A549 (cell line): ENCODE measurements at regions of chr1 and their contacts with region 1.

Region 1: GRCh38 chr1:228393248-228393699 is 13.4 kb downstream of the TRIM11 start:
- DNase-seq: peak in 1 of 2 experiments; percentile 56
- ATAC-seq: peak; percentile 72 to 84
- H3K4me3 ChIP-seq: no peak overlapping the region
- H3K27ac ChIP-seq: no peak overlapping the region
- H3K4me1 ChIP-seq: peaks cover 13% of the 10 kb centered on the region
- CTCF ChIP-seq: peak; percentile 43
- EP300 ChIP-seq: no peak
- POLR2A ChIP-seq: no peak
- RAD21 ChIP-seq: peak in 1 of 2 experiments; percentile 36; a peak in 2 of 5 replicates

Region 2: GRCh38 chr1:228378090-228378872 is 15.0 kb before region 1 on chr1:
- CTCF ChIA-PET with region 1: interaction called, 17 read pairs
- POLR2A ChIA-PET with region 1: no interaction called
- DNase-seq: peak; percentile 62 to 72
- ATAC-seq: peak; percentile 75 to 83
- H3K4me3 ChIP-seq: peak overlapping the region; percentile 51
- H3K27ac ChIP-seq: peak overlapping the region; percentile 78 to 82
- H3K4me1 ChIP-seq: peaks cover 9% of the 10 kb centered on the region; the same call in 2 of the 3 replicates
- CTCF ChIP-seq: peak; percentile 62
- EP300 ChIP-seq: no peak
- POLR2A ChIP-seq: peak; percentile 30; the same call in 1 of the 2 replicates
- RAD21 ChIP-seq: peak; percentile 65 to 66; a peak in 4 of 5 replicates

Region 3: DNA sequence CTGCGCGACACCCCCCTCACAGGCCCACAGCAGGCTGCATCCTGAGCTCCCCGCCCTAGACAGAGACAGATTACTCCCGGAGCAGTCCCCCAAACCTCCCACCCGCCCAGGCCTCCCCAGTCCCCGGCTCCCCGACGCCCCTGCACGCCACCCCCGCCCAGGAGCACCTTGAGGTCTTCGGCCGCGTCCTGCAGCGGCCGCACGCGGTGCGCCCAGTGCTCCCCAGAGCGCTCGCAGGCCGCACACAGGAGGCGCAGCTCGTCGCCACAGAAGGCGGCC is 12.7 kb after region 1 on chr1:
- CTCF ChIA-PET with region 1: interaction called, 30 read pairs
- POLR2A ChIA-PET with region 1: interaction called, 18 read pairs
- DNase-seq: no peak
- ATAC-seq: peak in 1 of 2 experiments; percentile 13; a peak in 3 of 6 replicates
- H3K4me3 ChIP-seq: peak overlapping the region; percentile 97
- H3K27ac ChIP-seq: peak overlapping the region; percentile 94
- H3K4me1 ChIP-seq: peaks cover 30% of the 10 kb centered on the region
- CTCF ChIP-seq: no peak
- EP300 ChIP-seq: no peak
- POLR2A ChIP-seq: no peak
- RAD21 ChIP-seq: no peak